ENCODE measurements at regions of chr2 and their contacts with region 1.

Region 1: GRCh38 chr2:201158111-201158929 is 24.6 kb upstream of the CASP10 start:
- DNase-seq: peak; percentile 81
- H3K4me3 Mint-ChIP-seq: no peak overlapping the region
- H3K27ac Mint-ChIP-seq: peak overlapping the region; percentile 75
- H3K4me1 Mint-ChIP-seq: peaks cover 12% of the 10 kb centered on the region
- H3K27me3 Mint-ChIP-seq: no peaks in the 10 kb centered on the region

Region 2: GRCh38 chr2:200860092-200860795 is 298.1 kb before region 1 on chr2:
- CTCF ChIA-PET with region 1: no interaction called
- POLR2A ChIA-PET with region 1: no interaction called
- DNase-seq: peak; percentile 29
- H3K4me3 Mint-ChIP-seq: peak overlapping the region; percentile 90
- H3K27ac Mint-ChIP-seq: peak overlapping the region; percentile 81
- H3K4me1 Mint-ChIP-seq: peaks cover 52% of the 10 kb centered on the region
- H3K27me3 Mint-ChIP-seq: no peaks in the 10 kb centered on the region

Region 3: GRCh38 chr2:201144101-201145051 is 13.9 kb before region 1 on chr2:
- CTCF ChIA-PET with region 1: interaction called, 13 read pairs
- POLR2A ChIA-PET with region 1: no interaction called
- DNase-seq: no peak
- H3K4me3 Mint-ChIP-seq: no peak overlapping the region
- H3K27ac Mint-ChIP-seq: peak overlapping the region; percentile 2
- H3K4me1 Mint-ChIP-seq: peaks cover 8% of the 10 kb centered on the region
- H3K27me3 Mint-ChIP-seq: no peaks in the 10 kb centered on the region

Region 4: GRCh38 chr2:201182650-201183364 is 24.5 kb after region 1 on chr2 and contains the start of gene CASP10:
- CTCF ChIA-PET with region 1: interaction called, 12 read pairs
- POLR2A ChIA-PET with region 1: no interaction called
- DNase-seq: peak; percentile 50
- H3K4me3 Mint-ChIP-seq: peak within 1 kb of the TSS; percentile 90
- H3K27ac Mint-ChIP-seq: peak within 1 kb of the TSS; percentile 89
- H3K4me1 Mint-ChIP-seq: peaks cover 40% of the 10 kb centered on the region
- H3K27me3 Mint-ChIP-seq: no peaks in the 10 kb centered on the region
- total RNA-seq, gene CASP10: 45.0 to 49.6 TPM

Region 5: GRCh38 chr2:201220102-201220570 is 61.8 kb after region 1 on chr2:
- CTCF ChIA-PET with region 1: no interaction called
- POLR2A ChIA-PET with region 1: no interaction called
- DNase-seq: no peak
- H3K4me3 Mint-ChIP-seq: no peak overlapping the region
- H3K27ac Mint-ChIP-seq: peak overlapping the region; percentile 54
- H3K4me1 Mint-ChIP-seq: peaks cover 54% of the 10 kb centered on the region
- H3K27me3 Mint-ChIP-seq: no peaks in the 10 kb centered on the region